ENCODE measurements at regions of chr11 and their contacts with region 1.

Region 1: DNA sequence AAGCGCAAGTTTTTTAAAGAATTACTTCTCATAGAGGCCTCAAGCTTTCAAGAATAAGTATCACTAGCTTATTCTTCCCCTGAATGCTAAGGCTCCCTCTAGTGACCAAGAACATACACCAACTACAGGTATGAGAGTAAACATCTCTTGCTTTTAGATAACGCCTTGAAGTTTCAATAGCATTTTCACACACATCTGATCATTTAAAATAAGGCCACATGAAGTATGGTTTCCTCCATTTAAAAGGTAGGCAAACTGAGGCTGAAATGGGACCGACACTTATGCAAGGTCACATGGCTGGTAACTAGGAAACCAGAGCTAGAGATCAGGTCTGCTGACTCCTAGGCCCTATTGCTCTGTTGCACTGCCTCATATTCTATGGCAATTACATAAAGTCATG is 66.5 kb downstream of the CCDC34 start:
- DNase-seq: peak; percentile 69
- H3K4me3 Mint-ChIP-seq: no peak overlapping the region
- H3K27ac Mint-ChIP-seq: no peak overlapping the region
- H3K4me1 Mint-ChIP-seq: peaks cover 3% of the 10 kb centered on the region
- H3K27me3 Mint-ChIP-seq: no peaks in the 10 kb centered on the region
- CTCF ChIP-seq: peak; percentile 56

Region 2: GRCh38 chr11:27100534-27100933 is 196.0 kb before region 1 on chr11:
- CTCF ChIA-PET with region 1: no interaction called
- POLR2A ChIA-PET with region 1: no interaction called
- intact Hi-C with region 1: no loop called
- DNase-seq: no peak
- H3K4me3 Mint-ChIP-seq: no peak overlapping the region
- H3K27ac Mint-ChIP-seq: no peak overlapping the region
- H3K4me1 Mint-ChIP-seq: peaks cover 8% of the 10 kb centered on the region
- H3K27me3 Mint-ChIP-seq: no peaks in the 10 kb centered on the region
- CTCF ChIP-seq: no peak

Region 3: GRCh38 chr11:27201454-27202236 is 94.9 kb before region 1 on chr11:
- CTCF ChIA-PET with region 1: interaction called, 59 read pairs
- POLR2A ChIA-PET with region 1: interaction called, 3 read pairs
- intact Hi-C with region 1: loop called (anchors 1 kb)
- DNase-seq: peak; percentile 70
- H3K4me3 Mint-ChIP-seq: no peak overlapping the region
- H3K27ac Mint-ChIP-seq: no peak overlapping the region
- H3K4me1 Mint-ChIP-seq: peaks cover 6% of the 10 kb centered on the region
- H3K27me3 Mint-ChIP-seq: no peaks in the 10 kb centered on the region
- CTCF ChIP-seq: no peak

Region 4: GRCh38 chr11:27228232-27228905 is 68.1 kb before region 1 on chr11:
- CTCF ChIA-PET with region 1: interaction called, 13 read pairs
- POLR2A ChIA-PET with region 1: interaction called, 4 read pairs
- intact Hi-C with region 1: no loop called
- DNase-seq: peak; percentile 78
- H3K4me3 Mint-ChIP-seq: no peak overlapping the region
- H3K27ac Mint-ChIP-seq: peak overlapping the region; percentile 29
- H3K4me1 Mint-ChIP-seq: peaks cover 13% of the 10 kb centered on the region
- H3K27me3 Mint-ChIP-seq: no peaks in the 10 kb centered on the region
- CTCF ChIP-seq: no peak

Region 5: GRCh38 chr11:27281740-27282590 is 14.5 kb before region 1 on chr11:
- CTCF ChIA-PET with region 1: interaction called, 31 read pairs
- POLR2A ChIA-PET with region 1: no interaction called
- intact Hi-C with region 1: no loop called
- DNase-seq: peak; percentile 55
- H3K4me3 Mint-ChIP-seq: no peak overlapping the region
- H3K27ac Mint-ChIP-seq: no peak overlapping the region
- H3K4me1 Mint-ChIP-seq: peaks cover 6% of the 10 kb centered on the region
- H3K27me3 Mint-ChIP-seq: peaks cover 11% of the 10 kb centered on the region
- CTCF ChIP-seq: no peak

Region 6: GRCh38 chr11:27497284-27497866 is 200.9 kb after region 1 on chr11:
- CTCF ChIA-PET with region 1: interaction called, 26 read pairs
- POLR2A ChIA-PET with region 1: no interaction called
- intact Hi-C with region 1: no loop called
- DNase-seq: peak; percentile 29
- H3K4me3 Mint-ChIP-seq: no peak overlapping the region
- H3K27ac Mint-ChIP-seq: no peak overlapping the region
- H3K4me1 Mint-ChIP-seq: peaks cover 8% of the 10 kb centered on the region
- H3K27me3 Mint-ChIP-seq: no peaks in the 10 kb centered on the region
- CTCF ChIP-seq: peak; percentile 29

Region 7: DNA sequence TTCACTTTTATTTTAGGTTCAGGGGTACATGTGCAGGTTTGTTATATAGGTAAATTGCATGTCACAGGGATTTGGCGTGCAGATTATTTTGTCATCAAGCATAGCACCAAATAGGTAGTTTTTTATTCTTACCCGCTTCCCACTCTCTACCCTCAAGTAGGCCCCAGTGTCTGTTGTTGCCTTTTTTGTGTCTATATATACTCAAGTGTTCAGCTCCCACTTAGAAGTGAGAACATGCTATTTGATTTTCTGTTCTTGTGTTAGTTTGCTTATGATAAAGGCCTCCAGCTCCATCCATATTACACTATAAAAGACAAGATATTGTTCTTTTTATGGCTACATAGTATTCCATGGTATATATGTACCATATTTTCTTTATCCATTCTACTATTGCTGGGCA is 238.6 kb after region 1 on chr11:
- CTCF ChIA-PET with region 1: no interaction called
- POLR2A ChIA-PET with region 1: no interaction called
- intact Hi-C with region 1: no loop called
- DNase-seq: no peak
- H3K4me3 Mint-ChIP-seq: no peak overlapping the region
- H3K27ac Mint-ChIP-seq: no peak overlapping the region
- H3K4me1 Mint-ChIP-seq: peaks cover 11% of the 10 kb centered on the region
- H3K27me3 Mint-ChIP-seq: no peaks in the 10 kb centered on the region
- CTCF ChIP-seq: no peak